Activated CD4-positive, alpha-beta memory T cell treated with anti-CD3 and anti-CD28 coated beads for 36 hours (primary cell): ENCODE measurements at regions of chr16 and their contacts with region 1.

Region 1: GRCh38 chr16:74606521-74607310 is at the start of gene GLG1:
- DNase-seq: peak; percentile 93
- H3K4me3 Mint-ChIP-seq: peak within 1 kb of the TSS; percentile 83
- H3K27ac Mint-ChIP-seq: peak within 1 kb of the TSS; percentile 85
- H3K4me1 Mint-ChIP-seq: peaks cover 54% of the 10 kb centered on the region
- H3K27me3 Mint-ChIP-seq: no peaks in the 10 kb centered on the region
- total RNA-seq, gene GLG1: 58.1 to 63.8 TPM

Region 2: GRCh38 chr16:74372953-74373846 is 233.5 kb before region 1 on chr16:
- CTCF ChIA-PET with region 1: no interaction called
- POLR2A ChIA-PET with region 1: no interaction called
- intact Hi-C with region 1: loop called (anchors 10 kb)
- DNase-seq: no peak
- H3K4me3 Mint-ChIP-seq: no peak overlapping the region
- H3K27ac Mint-ChIP-seq: no peak overlapping the region
- H3K4me1 Mint-ChIP-seq: no peaks in the 10 kb centered on the region
- H3K27me3 Mint-ChIP-seq: no peaks in the 10 kb centered on the region

Region 3: GRCh38 chr16:74501484-74502479 is 104.9 kb before region 1 on chr16:
- CTCF ChIA-PET with region 1: no interaction called
- POLR2A ChIA-PET with region 1: no interaction called
- intact Hi-C with region 1: loop called (anchors 10 kb)
- DNase-seq: no peak
- H3K4me3 Mint-ChIP-seq: no peak overlapping the region
- H3K27ac Mint-ChIP-seq: peak overlapping the region; percentile 14
- H3K4me1 Mint-ChIP-seq: peaks cover 14% of the 10 kb centered on the region
- H3K27me3 Mint-ChIP-seq: no peaks in the 10 kb centered on the region

Region 4: DNA sequence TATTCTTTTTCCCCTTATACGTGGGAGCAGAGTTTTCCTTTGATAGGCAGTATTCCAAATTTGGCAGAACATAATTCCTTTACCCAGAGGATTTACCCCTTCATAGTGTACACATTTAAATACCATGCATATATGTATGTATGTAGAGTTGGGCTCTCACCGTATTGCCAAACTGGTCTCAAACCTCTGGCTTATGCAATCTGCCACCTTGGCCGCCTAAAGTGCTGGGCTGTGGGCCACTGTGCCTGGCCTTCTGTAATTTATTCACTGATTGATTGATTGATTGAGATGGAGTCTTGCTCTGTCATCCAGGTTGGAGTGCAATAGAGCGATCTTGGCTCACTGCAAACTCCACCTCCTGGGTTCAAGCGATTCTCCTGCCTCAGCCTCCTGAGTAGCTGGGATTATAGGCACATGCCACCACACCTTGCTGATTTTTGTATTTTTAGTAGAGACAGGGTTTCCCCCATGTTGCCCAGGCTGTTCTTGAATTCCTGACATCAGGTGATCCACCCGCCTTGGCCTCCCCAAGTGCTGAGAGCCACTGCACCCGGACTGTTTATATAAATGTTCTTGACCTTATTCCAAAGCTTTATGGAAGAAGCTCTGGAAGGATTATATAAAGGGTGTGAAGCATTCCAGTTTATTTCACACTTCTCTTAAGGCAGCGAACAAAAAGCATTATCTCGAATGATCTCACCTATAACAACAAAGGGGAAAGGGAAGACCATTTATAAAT is 14.7 kb before region 1 on chr16:
- CTCF ChIA-PET with region 1: interaction called, 6 read pairs
- POLR2A ChIA-PET with region 1: interaction called, 10 read pairs
- intact Hi-C with region 1: no loop called
- DNase-seq: no peak
- H3K4me3 Mint-ChIP-seq: no peak overlapping the region
- H3K27ac Mint-ChIP-seq: no peak overlapping the region
- H3K4me1 Mint-ChIP-seq: peaks cover 45% of the 10 kb centered on the region
- H3K27me3 Mint-ChIP-seq: no peaks in the 10 kb centered on the region

Region 5: GRCh38 chr16:74666425-74667254 is 59.9 kb after region 1 on chr16 and contains the start of gene RFWD3:
- CTCF ChIA-PET with region 1: no interaction called
- POLR2A ChIA-PET with region 1: interaction called, 6 read pairs
- intact Hi-C with region 1: loop called (anchors 1 kb)
- DNase-seq: peak; percentile 98
- H3K4me3 Mint-ChIP-seq: peak within 1 kb of the TSS; percentile 85
- H3K27ac Mint-ChIP-seq: peak within 1 kb of the TSS; percentile 91
- H3K4me1 Mint-ChIP-seq: peaks cover 39% of the 10 kb centered on the region
- H3K27me3 Mint-ChIP-seq: no peaks in the 10 kb centered on the region
- total RNA-seq, gene RFWD3: 95.3 to 109 TPM